PC-9 (cell line): ENCODE measurements at regions of chr9 and their contacts with region 1.

Region 1: GRCh38 chr9:37602817-37603216 is 10.4 kb upstream of the TOMM5 start:
- DNase-seq: peak; percentile 60 to 72
- H3K4me3 ChIP-seq: no peak overlapping the region
- H3K27ac ChIP-seq: no peak overlapping the region
- H3K4me1 ChIP-seq: peaks cover 12% of the 10 kb centered on the region
- H3K27me3 ChIP-seq: no peaks in the 10 kb centered on the region
- CTCF ChIP-seq: no peak

Region 2: DNA sequence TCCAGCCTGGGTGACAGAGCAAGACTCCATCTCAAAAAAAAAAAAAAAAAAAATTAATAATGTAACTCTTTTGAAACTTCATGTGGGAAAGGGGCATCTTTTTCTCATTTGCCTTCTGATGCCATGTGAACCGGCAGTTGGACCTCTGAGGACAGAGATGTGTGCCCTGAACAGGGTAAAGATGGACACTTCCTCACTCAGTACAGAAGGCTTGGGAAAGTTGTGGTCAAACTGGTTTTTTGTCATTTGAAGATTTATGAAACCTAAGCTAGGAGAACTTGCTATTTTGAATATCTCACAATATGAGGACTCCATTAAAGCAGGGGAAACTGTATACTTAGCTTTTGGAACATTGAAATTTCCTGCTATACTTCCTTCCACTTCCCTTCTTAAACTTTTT is 642.1 kb after region 1 on chr9:
- CTCF ChIA-PET with region 1: no interaction called
- POLR2A ChIA-PET with region 1: interaction called, 21 read pairs
- intact Hi-C with region 1: no loop called
- DNase-seq: peak in 1 of 2 experiments; percentile 62
- H3K4me3 ChIP-seq: no peak overlapping the region
- H3K27ac ChIP-seq: no peak overlapping the region
- H3K4me1 ChIP-seq: peaks cover 7% of the 10 kb centered on the region; the same call in 1 of the 2 replicates
- H3K27me3 ChIP-seq: no peaks in the 10 kb centered on the region
- CTCF ChIP-seq: no peak

Region 3: DNA sequence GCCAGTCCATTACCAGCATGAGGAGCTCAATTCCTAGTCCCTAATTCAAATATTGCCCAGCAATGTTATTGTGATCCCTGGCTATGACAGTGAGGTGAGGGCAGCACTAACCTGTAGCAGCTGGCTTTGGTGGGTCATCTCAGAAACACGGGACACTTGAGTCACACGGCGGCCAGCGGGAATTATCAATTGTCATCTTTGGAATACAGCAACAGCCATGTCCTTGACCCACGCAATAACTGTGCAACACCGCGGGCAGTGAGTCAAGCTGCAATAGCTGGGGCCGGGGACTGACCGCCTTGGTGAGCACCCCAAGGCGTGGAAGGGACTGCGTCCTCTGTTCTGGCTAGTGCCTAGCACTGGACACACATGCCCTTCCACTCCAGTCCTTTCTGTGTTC is 727.2 kb after region 1 on chr9:
- CTCF ChIA-PET with region 1: no interaction called
- POLR2A ChIA-PET with region 1: interaction called, 11 read pairs
- intact Hi-C with region 1: no loop called
- DNase-seq: no peak
- H3K4me3 ChIP-seq: no peak overlapping the region
- H3K27ac ChIP-seq: no peak overlapping the region
- H3K4me1 ChIP-seq: no peaks in the 10 kb centered on the region
- H3K27me3 ChIP-seq: no peaks in the 10 kb centered on the region
- CTCF ChIP-seq: no peak